Activated CD8-positive, alpha-beta memory T cell treated with anti-CD3 and anti-CD28 coated beads, Interleukin-2, amount 10 ng/mL, durations not matched to agents 7 days and 5 days (primary cell): ENCODE measurements at regions of chr2 and their contacts with region 1.

Region 1: GRCh38 chr2:12490646-12491045 is 226.1 kb upstream of the TRIB2 start:
- DNase-seq: no peak
- ATAC-seq: no peak
- H3K4me3 Mint-ChIP-seq: no peak overlapping the region
- H3K27ac Mint-ChIP-seq: no peak overlapping the region
- H3K4me1 Mint-ChIP-seq: peaks cover 61% of the 10 kb centered on the region
- H3K27me3 Mint-ChIP-seq: no peaks in the 10 kb centered on the region

Region 2: DNA sequence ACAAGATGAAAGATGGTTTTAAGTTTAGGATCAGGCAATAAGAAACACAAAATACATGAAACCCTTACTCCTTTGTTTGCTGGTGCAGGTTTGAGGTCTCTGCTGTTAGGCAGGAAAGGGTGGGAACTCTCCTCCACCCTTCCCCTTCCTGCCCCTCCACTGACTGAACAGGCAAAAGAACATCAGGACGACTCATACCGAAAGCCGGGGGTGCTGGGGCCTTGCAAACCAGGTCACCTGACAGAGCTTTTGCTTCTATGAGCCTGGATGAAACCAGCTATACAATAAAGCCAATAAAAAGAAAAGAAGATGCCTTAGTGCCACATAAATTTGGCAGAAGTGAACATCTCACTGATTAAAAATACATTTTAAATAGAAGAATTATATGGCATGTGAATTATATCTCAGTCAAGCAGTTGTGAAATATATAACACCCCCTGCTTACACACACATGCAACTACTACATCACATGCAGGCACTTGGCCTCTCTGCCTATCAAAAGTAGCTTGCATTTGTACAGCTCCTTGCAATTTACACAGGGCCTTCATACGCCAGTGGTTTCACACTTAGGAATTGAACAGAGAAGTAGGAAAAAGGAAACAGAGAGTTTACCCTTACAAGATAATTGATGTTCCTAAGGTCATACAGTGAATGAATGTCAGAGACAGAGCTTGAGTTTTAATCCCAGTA is 11.0 kb after region 1 on chr2:
- CTCF ChIA-PET with region 1: interaction called, 10 read pairs
- DNase-seq: peak; percentile 94
- ATAC-seq: peak; percentile 96
- H3K4me3 Mint-ChIP-seq: peak overlapping the region; percentile 45
- H3K27ac Mint-ChIP-seq: peak overlapping the region; percentile 90
- H3K4me1 Mint-ChIP-seq: peaks cover 89% of the 10 kb centered on the region
- H3K27me3 Mint-ChIP-seq: no peaks in the 10 kb centered on the region

Region 3: GRCh38 chr2:12543978-12544558 is 53.4 kb after region 1 on chr2:
- CTCF ChIA-PET with region 1: no interaction called
- DNase-seq: no peak
- ATAC-seq: no peak
- H3K4me3 Mint-ChIP-seq: no peak overlapping the region
- H3K27ac Mint-ChIP-seq: no peak overlapping the region
- H3K4me1 Mint-ChIP-seq: no peaks in the 10 kb centered on the region
- H3K27me3 Mint-ChIP-seq: no peaks in the 10 kb centered on the region